Mammary epithelial cell (primary cell): ENCODE measurements at regions of chr15 and their contacts with region 1.

Region 1: DNA sequence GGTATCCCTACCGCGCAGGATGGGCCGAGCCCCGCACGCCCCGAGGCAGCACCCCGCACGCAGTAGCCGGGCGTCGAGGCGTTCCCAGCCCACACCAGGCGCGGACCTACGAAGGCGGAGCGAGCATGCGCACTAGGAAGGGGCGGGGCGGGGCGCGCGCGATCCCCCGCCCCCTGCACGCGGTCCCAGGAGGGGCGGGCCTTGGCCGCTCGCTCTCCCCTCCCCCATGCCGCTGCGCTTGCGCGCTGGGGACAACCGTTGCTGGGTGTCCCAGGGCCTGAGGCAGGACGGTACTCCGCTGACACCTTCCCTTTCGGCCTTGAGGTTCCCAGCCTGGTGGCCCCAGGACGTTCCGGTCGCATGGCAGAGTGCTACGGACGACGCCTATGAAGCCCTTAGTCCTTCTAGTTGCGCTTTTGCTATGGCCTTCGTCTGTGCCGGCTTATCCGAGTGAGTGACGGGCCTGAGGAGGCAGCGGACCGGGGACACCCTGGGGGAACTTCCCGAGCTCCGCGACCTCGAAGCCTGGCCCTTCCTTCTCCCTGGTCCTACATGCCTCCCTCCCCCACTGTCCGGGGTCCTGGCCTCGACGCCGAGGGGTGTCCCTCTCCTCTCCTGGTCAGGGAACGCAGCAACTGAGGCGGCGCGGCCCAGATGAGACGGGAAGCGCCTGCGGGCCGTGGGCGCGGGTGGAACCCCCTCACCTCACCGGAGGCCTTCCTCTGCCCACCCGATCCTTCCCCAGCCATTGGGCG is at the start of gene SPESP1:
- DNase-seq: no peak
- H3K4me3 ChIP-seq: peak within 1 kb of the TSS; percentile 51 to 75 (median 57)
- H3K27ac ChIP-seq: peak within 1 kb of the TSS; percentile 37
- H3K4me1 ChIP-seq: peaks cover 5% of the 10 kb centered on the region
- H3K27me3 ChIP-seq: no peaks in the 10 kb centered on the region
- CTCF ChIP-seq: no peak
- total RNA-seq, gene SPESP1: 9.2 TPM in 1 of 2 donors, not detected in the other

Region 2: GRCh38 chr15:68909601-68910100 is 20.8 kb before region 1 on chr15:
- CTCF ChIA-PET with region 1: no interaction called
- dilution Hi-C with region 1: no loop called
- in situ Hi-C with region 1: no loop called
- intact Hi-C with region 1: no loop called
- DNase-seq: no peak
- H3K4me3 ChIP-seq: no peak overlapping the region
- H3K27ac ChIP-seq: no peak overlapping the region
- H3K4me1 ChIP-seq: no peaks in the 10 kb centered on the region
- H3K27me3 ChIP-seq: no peaks in the 10 kb centered on the region
- CTCF ChIP-seq: no peak

Region 3: GRCh38 chr15:69462493-69463181 is 532.2 kb after region 1 on chr15:
- CTCF ChIA-PET with region 1: interaction called, 36 read pairs
- dilution Hi-C with region 1: no loop called
- in situ Hi-C with region 1: no loop called
- intact Hi-C with region 1: no loop called
- DNase-seq: peak; percentile 96
- H3K4me3 ChIP-seq: peak overlapping the region; percentile 57 to 66 (median 61)
- H3K27ac ChIP-seq: peak overlapping the region; percentile 92
- H3K4me1 ChIP-seq: peaks cover 22% of the 10 kb centered on the region
- H3K27me3 ChIP-seq: no peaks in the 10 kb centered on the region
- CTCF ChIP-seq: peak; percentile 86 to 89